ENCODE measurements at regions of chr1 and their contacts with region 1.

Region 1: GRCh38 chr1:114346480-114347029 is 164.4 kb downstream of the TRIM33 start:
- DNase-seq: peak; percentile 98
- ATAC-seq: peak; percentile 99
- H3K4me3 Mint-ChIP-seq: peak overlapping the region; percentile 82
- H3K27ac Mint-ChIP-seq: peak overlapping the region; percentile 97
- H3K4me1 Mint-ChIP-seq: peaks cover 43% of the 10 kb centered on the region
- H3K27me3 Mint-ChIP-seq: no peaks in the 10 kb centered on the region

Region 2: DNA sequence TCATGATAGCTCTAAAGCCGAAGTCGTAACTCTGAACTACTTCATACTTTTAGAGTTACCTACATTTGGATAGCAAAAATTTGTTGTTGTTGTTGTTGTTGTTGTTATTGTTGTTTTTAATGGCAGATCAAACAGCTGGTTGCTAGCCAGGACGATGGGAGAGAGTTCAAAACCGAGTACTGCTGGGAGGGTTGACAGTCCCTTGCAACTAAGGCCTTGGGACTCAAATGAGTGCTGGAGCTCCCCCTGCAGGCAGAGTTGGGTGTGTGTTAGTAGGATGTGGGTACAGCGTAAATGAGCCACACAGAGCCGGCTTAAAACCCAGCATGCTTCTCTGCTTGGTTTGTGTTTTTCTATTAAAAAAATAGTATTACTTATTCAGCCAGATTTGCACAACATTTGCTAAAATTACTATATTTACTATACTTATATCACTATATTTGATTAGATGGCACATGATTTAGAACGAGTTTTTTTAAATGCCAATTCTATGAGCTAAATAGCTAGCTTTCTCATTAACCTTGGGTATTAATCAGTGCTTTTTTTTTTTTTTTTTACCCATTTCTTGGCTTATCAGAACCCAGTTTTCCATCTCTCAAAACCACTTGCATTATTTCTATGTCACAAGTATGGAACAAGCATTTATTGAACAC is 63.7 kb before region 1 on chr1:
- CTCF ChIA-PET with region 1: interaction called, 30 read pairs
- POLR2A ChIA-PET with region 1: no interaction called
- DNase-seq: peak; percentile 93
- ATAC-seq: peak; percentile 100
- H3K4me3 Mint-ChIP-seq: no peak overlapping the region
- H3K27ac Mint-ChIP-seq: no peak overlapping the region
- H3K4me1 Mint-ChIP-seq: peaks cover 6% of the 10 kb centered on the region
- H3K27me3 Mint-ChIP-seq: peaks cover 13% of the 10 kb centered on the region

Region 3: DNA sequence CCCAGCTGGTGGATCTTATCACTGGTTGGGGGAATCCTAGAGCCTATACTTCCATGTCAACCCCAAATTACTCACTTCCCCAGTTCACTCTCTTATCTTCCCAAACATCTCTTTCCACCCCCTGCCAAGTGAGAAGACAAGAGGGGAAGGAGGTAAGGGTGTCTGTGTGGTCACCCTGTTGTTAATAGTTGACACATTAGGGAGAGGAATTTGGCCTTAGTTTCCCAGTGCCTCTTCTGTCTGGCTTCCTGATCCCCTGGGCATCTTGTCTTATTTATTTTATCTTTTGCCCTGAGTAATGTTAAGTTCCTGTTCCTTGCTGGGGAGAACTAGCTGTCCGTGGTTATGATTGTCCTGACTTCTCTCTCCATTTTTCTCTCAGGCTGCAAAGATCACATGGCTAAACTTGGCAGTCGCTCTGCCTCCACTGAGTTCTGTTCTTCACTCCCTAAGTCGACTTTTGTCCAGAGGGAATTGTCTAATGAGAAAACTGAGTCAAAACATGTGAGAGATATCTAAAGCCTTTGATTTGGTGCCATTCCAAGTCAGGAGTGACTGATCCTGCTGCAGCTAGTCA is 35.8 kb before region 1 on chr1:
- CTCF ChIA-PET with region 1: no interaction called
- POLR2A ChIA-PET with region 1: no interaction called
- DNase-seq: no peak
- ATAC-seq: no peak
- H3K4me3 Mint-ChIP-seq: no peak overlapping the region
- H3K27ac Mint-ChIP-seq: no peak overlapping the region
- H3K4me1 Mint-ChIP-seq: no peaks in the 10 kb centered on the region
- H3K27me3 Mint-ChIP-seq: peaks cover 13% of the 10 kb centered on the region

Region 4: GRCh38 chr1:114330451-114330983 is 16.0 kb before region 1 on chr1:
- CTCF ChIA-PET with region 1: interaction called, 45 read pairs
- POLR2A ChIA-PET with region 1: interaction called, 4 read pairs
- DNase-seq: peak; percentile 69
- ATAC-seq: peak; percentile 70
- H3K4me3 Mint-ChIP-seq: no peak overlapping the region
- H3K27ac Mint-ChIP-seq: peak overlapping the region; percentile 43
- H3K4me1 Mint-ChIP-seq: peaks cover 70% of the 10 kb centered on the region
- H3K27me3 Mint-ChIP-seq: peaks cover 2% of the 10 kb centered on the region

Region 5: GRCh38 chr1:114428083-114428749 is 81.7 kb after region 1 on chr1:
- CTCF ChIA-PET with region 1: interaction called, 51 read pairs
- POLR2A ChIA-PET with region 1: no interaction called
- DNase-seq: peak; percentile 22
- ATAC-seq: no peak
- H3K4me3 Mint-ChIP-seq: no peak overlapping the region
- H3K27ac Mint-ChIP-seq: no peak overlapping the region
- H3K4me1 Mint-ChIP-seq: peaks cover 8% of the 10 kb centered on the region
- H3K27me3 Mint-ChIP-seq: no peaks in the 10 kb centered on the region

Region 6: DNA sequence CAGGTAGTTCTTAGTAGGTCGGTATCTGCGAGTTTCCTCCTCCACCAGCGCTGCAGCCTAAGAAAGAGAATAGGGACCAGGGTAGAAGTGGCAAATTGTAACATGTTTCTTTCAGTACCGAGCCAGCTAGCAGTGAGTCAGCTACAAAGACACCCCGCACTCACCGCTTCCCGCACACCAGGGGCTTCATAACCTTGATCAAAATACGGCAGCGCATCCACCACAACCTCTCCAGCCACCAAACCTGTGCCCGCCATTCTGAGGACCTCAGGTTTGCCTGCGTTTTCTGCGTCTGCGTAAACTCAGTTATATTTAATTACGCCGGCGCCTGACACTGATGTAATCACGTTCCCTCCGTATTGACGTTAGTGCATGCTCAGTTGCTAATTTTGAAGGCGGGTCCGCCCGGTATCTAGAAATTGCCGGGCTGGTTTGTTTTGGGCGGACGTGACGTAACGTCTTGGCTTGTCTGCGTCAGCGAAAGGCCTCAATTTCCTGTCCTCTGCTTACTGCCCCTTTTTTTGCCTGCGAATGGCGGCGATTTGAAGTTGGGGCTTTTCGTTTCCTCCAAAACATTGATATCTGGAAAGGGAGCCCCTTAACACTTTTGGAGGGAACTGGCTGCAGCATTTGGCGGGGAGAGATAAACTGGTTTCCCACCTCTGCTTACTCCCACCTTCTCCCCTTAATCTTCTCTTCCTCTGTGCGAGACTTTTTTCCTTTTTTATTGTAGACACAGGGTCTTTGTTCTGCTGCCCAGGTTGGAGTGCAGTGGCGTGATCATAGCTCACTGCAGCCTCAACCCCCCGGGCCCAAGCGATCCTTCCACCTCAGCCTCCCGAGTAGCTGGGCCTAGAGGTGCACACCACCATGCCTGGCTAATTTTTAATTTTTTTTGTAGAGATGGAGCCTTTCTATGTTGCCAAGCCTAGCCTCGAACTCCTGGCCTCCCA is 235.1 kb after region 1 on chr1 and contains the start of gene BCAS2:
- CTCF ChIA-PET with region 1: interaction called, 10 read pairs
- POLR2A ChIA-PET with region 1: interaction called, 4 read pairs
- DNase-seq: peak; percentile 98
- ATAC-seq: peak; percentile 98
- H3K4me3 Mint-ChIP-seq: peak within 1 kb of the TSS; percentile 94
- H3K27ac Mint-ChIP-seq: peak within 1 kb of the TSS; percentile 96
- H3K4me1 Mint-ChIP-seq: peaks cover 32% of the 10 kb centered on the region
- H3K27me3 Mint-ChIP-seq: no peaks in the 10 kb centered on the region
- total RNA-seq, gene BCAS2: 43.4 to 47.5 TPM

Region 7: GRCh38 chr1:114716304-114717170 is 370.0 kb after region 1 on chr1 and contains the start of gene NRAS:
- CTCF ChIA-PET with region 1: interaction called, 10 read pairs
- POLR2A ChIA-PET with region 1: no interaction called
- DNase-seq: peak; percentile 97
- ATAC-seq: peak; percentile 96
- H3K4me3 Mint-ChIP-seq: peak within 1 kb of the TSS; percentile 95
- H3K27ac Mint-ChIP-seq: peak within 1 kb of the TSS; percentile 99
- H3K4me1 Mint-ChIP-seq: peaks cover 23% of the 10 kb centered on the region
- H3K27me3 Mint-ChIP-seq: no peaks in the 10 kb centered on the region
- total RNA-seq, gene NRAS: 50.3 to 51.7 TPM

Region 8: DNA sequence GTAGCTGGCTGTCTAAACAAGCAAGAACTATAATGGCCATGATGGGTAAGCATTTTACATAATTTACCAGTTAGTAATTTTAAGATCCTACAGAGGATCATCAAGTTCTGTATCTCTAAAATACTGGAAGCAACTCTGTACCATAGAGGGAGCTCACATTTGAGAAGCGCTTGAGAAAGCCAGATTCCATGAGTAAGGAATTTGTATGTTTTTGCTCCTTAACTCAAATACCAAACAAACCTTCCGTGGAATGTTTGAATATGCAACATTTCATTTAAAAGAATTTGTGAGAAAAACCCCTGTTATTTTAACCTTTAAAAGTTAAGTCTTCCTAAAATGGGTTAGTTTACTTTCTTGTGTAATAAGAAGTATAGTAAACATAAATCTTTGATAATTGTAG is 685.0 kb after region 1 on chr1:
- CTCF ChIA-PET with region 1: no interaction called
- POLR2A ChIA-PET with region 1: no interaction called
- DNase-seq: no peak
- ATAC-seq: no peak
- H3K4me3 Mint-ChIP-seq: no peak overlapping the region
- H3K27ac Mint-ChIP-seq: no peak overlapping the region
- H3K4me1 Mint-ChIP-seq: no peaks in the 10 kb centered on the region
- H3K27me3 Mint-ChIP-seq: peaks cover 4% of the 10 kb centered on the region